GM13976 (cell line): ENCODE measurements at regions of chr2 and their contacts with region 1.

Region 1: GRCh38 chr2:29196792-29197788 is 81.9 kb downstream of the CLIP4 start:
- DNase-seq: peak; percentile 78
- CTCF ChIP-seq: peak; percentile 79

Region 2: GRCh38 chr2:28566521-28567041 is 630.5 kb before region 1 on chr2:
- in situ Hi-C with region 1: loop called (anchors 25 kb)
- DNase-seq: peak; percentile 97
- CTCF ChIP-seq: peak; percentile 100

Region 3: GRCh38 chr2:28606986-28607441 is 590.1 kb before region 1 on chr2:
- in situ Hi-C with region 1: no loop called
- DNase-seq: no peak
- CTCF ChIP-seq: no peak

Region 4: GRCh38 chr2:28810384-28811285 is 386.5 kb before region 1 on chr2 and contains the start of gene SPDYA:
- in situ Hi-C with region 1: loop called (anchors 25 kb)
- DNase-seq: peak; percentile 90
- CTCF ChIP-seq: no peak

Region 5: DNA sequence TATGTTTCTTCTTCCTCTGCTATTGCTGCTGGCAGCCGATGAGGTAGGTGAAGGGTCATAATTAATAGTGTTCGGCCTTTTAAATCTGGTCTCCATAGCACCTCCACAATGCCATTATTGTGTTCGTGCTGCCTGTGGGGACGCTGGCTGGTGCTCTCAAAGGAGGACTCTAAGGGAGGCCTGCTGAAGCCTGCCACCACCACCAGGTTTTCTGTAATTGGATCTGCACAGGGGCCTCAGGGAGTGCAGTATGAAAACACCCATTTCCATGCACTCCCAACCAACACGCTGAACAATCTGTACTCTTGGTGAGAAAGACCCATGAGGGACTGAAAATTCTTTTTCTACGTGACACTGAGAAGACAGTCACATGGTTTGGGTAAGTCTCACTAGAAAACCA is 99.5 kb before region 1 on chr2:
- in situ Hi-C with region 1: no loop called
- DNase-seq: no peak
- CTCF ChIP-seq: no peak